ENCODE measurements at regions of chr10 and their contacts with region 1.

Region 1: DNA sequence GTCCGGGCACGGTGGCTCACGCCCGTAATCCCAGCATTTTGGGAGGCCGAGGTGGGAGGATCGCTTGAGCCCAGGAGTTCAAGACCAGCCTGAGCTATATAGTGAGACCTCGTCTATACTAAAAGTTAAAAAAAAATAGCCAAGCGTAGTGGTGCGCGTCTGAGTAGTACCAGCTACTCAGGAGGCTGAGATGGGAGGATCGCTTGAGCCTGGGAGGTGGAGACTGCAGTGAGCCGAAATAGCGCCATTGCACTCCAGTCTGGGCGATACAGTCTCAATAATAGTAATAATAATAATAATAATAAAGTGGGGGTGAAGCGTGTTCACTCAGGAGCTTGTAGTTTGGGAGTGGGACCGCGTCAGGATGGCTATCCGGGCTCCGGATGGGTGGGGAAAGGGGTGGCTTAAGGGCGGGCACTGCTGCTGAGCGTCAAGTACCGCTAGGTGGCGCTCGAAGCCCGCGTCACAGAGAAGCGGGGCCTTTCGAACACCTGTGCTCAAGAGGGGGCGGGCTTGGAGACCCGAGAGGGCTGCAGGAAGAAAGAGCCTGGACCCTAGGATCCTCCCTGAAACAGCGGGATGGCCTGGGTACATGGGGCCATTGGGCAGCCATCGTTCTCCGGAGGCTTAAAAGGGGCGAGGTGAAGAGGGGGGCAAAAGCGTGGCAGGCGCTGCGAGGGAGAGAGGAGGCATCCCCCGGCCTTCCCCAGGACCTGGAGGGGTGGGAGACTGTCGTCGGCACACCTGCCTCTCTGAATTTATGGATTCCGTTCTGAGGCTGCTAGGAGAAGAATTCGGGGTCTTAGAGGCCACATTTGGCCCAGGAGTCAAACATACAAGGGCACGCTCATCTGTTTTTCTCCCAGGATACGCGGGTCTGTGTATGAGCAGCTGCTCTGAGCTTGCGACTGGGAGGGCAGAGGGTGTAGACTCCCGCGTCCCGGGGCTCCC is 14.5 kb downstream of the LBX1 start:
- DNase-seq: peak; percentile 93
- ATAC-seq: peak; percentile 65
- H3K4me3 Mint-ChIP-seq: peak overlapping the region; percentile 76
- H3K27ac Mint-ChIP-seq: no peak overlapping the region
- H3K4me1 Mint-ChIP-seq: peaks cover 30% of the 10 kb centered on the region
- H3K27me3 Mint-ChIP-seq: peaks cover 96% of the 10 kb centered on the region
- CTCF ChIP-seq: peak; percentile 83

Region 2: DNA sequence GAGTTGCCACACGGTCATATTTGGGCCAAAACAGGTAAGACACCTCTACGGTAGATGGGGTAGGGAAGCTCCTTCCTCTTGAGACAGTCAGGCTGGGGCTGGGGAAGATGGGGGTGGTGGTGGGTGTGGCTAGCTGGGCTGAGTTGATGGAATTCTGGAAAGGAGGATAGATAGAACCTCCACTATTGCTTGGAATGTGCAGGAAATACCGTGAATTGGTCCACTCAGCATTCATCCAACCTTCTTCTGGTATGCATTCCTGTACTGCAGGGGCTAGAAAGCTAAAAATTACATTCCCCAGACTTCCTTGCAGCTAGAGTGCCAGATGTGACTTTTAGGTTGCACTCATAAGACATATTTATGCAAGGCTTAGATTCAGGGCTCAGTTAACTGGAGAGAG is 58.8 kb before region 1 on chr10:
- CTCF ChIA-PET with region 1: interaction called, 63 read pairs
- POLR2A ChIA-PET with region 1: no interaction called
- DNase-seq: no peak
- ATAC-seq: no peak
- H3K4me3 Mint-ChIP-seq: no peak overlapping the region
- H3K27ac Mint-ChIP-seq: no peak overlapping the region
- H3K4me1 Mint-ChIP-seq: peaks cover 12% of the 10 kb centered on the region
- H3K27me3 Mint-ChIP-seq: peaks cover 71% of the 10 kb centered on the region
- CTCF ChIP-seq: no peak

Region 3: GRCh38 chr10:101228153-101228973 is 13.6 kb after region 1 on chr10:
- CTCF ChIA-PET with region 1: interaction called, 95 read pairs
- POLR2A ChIA-PET with region 1: no interaction called
- DNase-seq: peak; percentile 58
- ATAC-seq: peak; percentile 29
- H3K4me3 Mint-ChIP-seq: no peak overlapping the region
- H3K27ac Mint-ChIP-seq: no peak overlapping the region
- H3K4me1 Mint-ChIP-seq: peaks cover 44% of the 10 kb centered on the region
- H3K27me3 Mint-ChIP-seq: peaks cover 96% of the 10 kb centered on the region
- CTCF ChIP-seq: no peak

Region 4: GRCh38 chr10:101258179-101258885 is 43.6 kb after region 1 on chr10:
- CTCF ChIA-PET with region 1: interaction called, 26 read pairs
- POLR2A ChIA-PET with region 1: no interaction called
- DNase-seq: no peak
- ATAC-seq: peak; percentile 64
- H3K4me3 Mint-ChIP-seq: no peak overlapping the region
- H3K27ac Mint-ChIP-seq: no peak overlapping the region
- H3K4me1 Mint-ChIP-seq: peaks cover 41% of the 10 kb centered on the region
- H3K27me3 Mint-ChIP-seq: peaks cover 25% of the 10 kb centered on the region
- CTCF ChIP-seq: no peak

Region 5: GRCh38 chr10:101297901-101298486 is 83.3 kb after region 1 on chr10:
- CTCF ChIA-PET with region 1: interaction called, 203 read pairs
- POLR2A ChIA-PET with region 1: no interaction called
- DNase-seq: peak; percentile 92
- ATAC-seq: peak; percentile 81
- H3K4me3 Mint-ChIP-seq: no peak overlapping the region
- H3K27ac Mint-ChIP-seq: no peak overlapping the region
- H3K4me1 Mint-ChIP-seq: peaks cover 10% of the 10 kb centered on the region
- H3K27me3 Mint-ChIP-seq: peaks cover 69% of the 10 kb centered on the region
- CTCF ChIP-seq: peak; percentile 86

Region 6: GRCh38 chr10:101323495-101323894 is 108.8 kb after region 1 on chr10:
- CTCF ChIA-PET with region 1: interaction called, 12 read pairs
- POLR2A ChIA-PET with region 1: no interaction called
- DNase-seq: peak; percentile 18
- ATAC-seq: peak; percentile 75
- H3K4me3 Mint-ChIP-seq: no peak overlapping the region
- H3K27ac Mint-ChIP-seq: no peak overlapping the region
- H3K4me1 Mint-ChIP-seq: peaks cover 21% of the 10 kb centered on the region
- H3K27me3 Mint-ChIP-seq: peaks cover 6% of the 10 kb centered on the region; the same call in 1 of the 2 replicates
- CTCF ChIP-seq: no peak

Region 7: DNA sequence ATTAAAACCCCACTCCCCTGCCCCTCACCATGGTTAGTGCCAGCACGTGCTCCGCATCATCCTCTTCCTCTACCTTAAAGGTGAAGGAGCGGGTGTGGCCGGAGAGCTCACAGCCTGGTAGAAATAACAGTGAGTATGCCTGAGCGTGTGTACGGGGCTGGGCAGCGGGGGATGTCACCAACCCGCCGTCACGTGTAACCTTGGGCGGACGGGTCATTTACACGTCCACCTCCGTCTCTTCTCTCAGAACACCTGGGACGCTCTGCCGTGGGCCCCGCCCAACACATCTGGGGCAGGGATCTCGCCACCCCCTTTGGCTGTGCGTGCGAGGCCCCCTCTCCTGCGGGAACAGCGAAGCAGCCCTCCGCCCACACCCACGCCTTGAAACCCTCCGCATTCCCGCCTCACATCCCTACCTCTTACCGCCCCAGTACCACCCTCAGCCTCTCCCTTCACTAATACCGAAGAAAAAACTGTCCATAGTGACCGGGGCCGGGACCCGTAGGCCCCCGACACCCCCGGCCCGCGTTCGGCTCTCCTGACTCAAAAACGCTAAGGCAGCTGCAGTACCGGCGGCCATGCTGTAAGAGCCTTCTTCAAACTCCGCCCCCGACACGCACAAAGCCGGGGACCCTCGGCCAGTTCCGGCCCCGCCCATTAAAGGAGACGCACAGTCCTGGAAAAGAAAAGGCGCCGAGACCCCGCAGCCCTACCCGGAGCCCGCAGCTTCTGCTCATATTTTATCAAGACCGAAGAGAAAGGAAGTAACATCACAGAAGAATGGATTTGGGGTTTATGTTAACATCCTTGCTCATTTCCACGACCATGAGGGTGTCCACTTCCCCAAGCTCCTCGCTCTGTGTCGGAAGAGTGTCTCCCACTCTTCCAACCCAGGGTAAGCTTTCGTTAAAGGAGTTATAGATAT is 568.4 kb after region 1 on chr10 and contains the start of gene NPM3:
- CTCF ChIA-PET with region 1: interaction called, 12 read pairs
- POLR2A ChIA-PET with region 1: no interaction called
- DNase-seq: peak; percentile 93
- ATAC-seq: peak; percentile 40
- H3K4me3 Mint-ChIP-seq: peak within 1 kb of the TSS; percentile 100
- H3K27ac Mint-ChIP-seq: peak within 1 kb of the TSS; percentile 92
- H3K4me1 Mint-ChIP-seq: peaks cover 47% of the 10 kb centered on the region
- H3K27me3 Mint-ChIP-seq: peaks cover 11% of the 10 kb centered on the region
- CTCF ChIP-seq: no peak
- total RNA-seq, gene NPM3: 223 to 260 TPM (median 229 TPM) in 3 replicates